ENCODE measurements at regions of chrX and their contacts with region 1.

Region 1: GRCh38 chrX:135050603-135051002 is 1.3 kb downstream of the RTL8A start:
- DNase-seq: no peak
- ATAC-seq: no peak
- H3K4me3 ChIP-seq: no peak overlapping the region
- H3K4me3 Mint-ChIP-seq: peak overlapping the region; percentile 87
- H3K27ac ChIP-seq: no peak overlapping the region
- H3K27ac Mint-ChIP-seq: peak overlapping the region; percentile 25 to 95
- H3K4me1 ChIP-seq: peaks cover 12% of the 10 kb centered on the region
- H3K4me1 Mint-ChIP-seq: peaks cover 17 to 21% of the 10 kb centered on the region in 2 donors
- H3K27me3 ChIP-seq: no peaks in the 10 kb centered on the region
- H3K27me3 Mint-ChIP-seq: peaks cover 0 to 8% of the 10 kb centered on the region in 2 donors
- CTCF ChIP-seq: no peak

Region 2: DNA sequence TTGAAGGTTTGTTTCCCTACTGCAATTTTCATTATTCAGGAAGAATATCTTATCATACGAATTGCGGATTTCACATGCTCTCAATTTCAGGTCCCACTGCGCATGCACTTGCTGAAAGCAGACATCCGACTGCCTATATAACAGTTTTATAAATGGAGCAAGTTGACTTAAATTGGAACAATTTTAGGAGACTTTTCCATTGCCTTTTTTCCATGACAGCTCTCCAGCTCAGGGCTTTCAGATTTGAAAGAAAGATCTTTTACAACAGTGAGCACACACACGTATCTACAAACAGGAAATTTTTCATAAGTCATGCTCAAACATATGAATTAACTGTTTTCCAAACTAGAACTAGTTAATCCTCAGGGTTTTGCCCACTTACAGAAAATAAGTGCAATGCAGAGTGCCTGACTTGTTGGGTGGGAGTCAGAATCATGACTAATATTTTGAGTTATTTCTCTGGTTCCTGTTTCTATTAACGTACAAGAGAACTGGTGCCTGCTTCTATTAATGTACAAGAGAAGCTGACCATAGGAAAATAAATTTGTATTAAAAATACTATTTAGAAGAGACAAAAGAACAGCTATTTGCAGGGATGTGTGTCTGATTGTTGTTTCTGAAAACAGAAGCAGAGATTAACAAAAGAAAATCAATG is 1203.1 kb before region 1 on chrX:
- intact Hi-C with region 1: no loop called
- DNase-seq: no peak
- ATAC-seq: no peak
- H3K4me3 ChIP-seq: no peak overlapping the region
- H3K4me3 Mint-ChIP-seq: no peak overlapping the region
- H3K27ac ChIP-seq: no peak overlapping the region
- H3K27ac Mint-ChIP-seq: no peak overlapping the region
- H3K4me1 ChIP-seq: no peaks in the 10 kb centered on the region
- H3K4me1 Mint-ChIP-seq: no peaks in the 10 kb centered on the region
- H3K27me3 ChIP-seq: no peaks in the 10 kb centered on the region
- H3K27me3 Mint-ChIP-seq: peaks cover 0 to 16% of the 10 kb centered on the region in 2 donors
- CTCF ChIP-seq: no peak

Region 3: GRCh38 chrX:135003876-135004623 is 46.6 kb before region 1 on chrX:
- intact Hi-C with region 1: loop called (anchors 1 kb)
- DNase-seq: peak; percentile 89 to 94
- ATAC-seq: peak; percentile 97 to 100 (median 98)
- H3K4me3 ChIP-seq: peak overlapping the region; percentile 32
- H3K4me3 Mint-ChIP-seq: peak overlapping the region; percentile 90
- H3K27ac ChIP-seq: no peak overlapping the region
- H3K27ac Mint-ChIP-seq: peak overlapping the region; percentile 65 to 92
- H3K4me1 ChIP-seq: peaks cover 5% of the 10 kb centered on the region
- H3K4me1 Mint-ChIP-seq: peaks cover 7 to 10% of the 10 kb centered on the region in 2 donors
- H3K27me3 ChIP-seq: no peaks in the 10 kb centered on the region
- H3K27me3 Mint-ChIP-seq: peaks cover 0 to 18% of the 10 kb centered on the region in 2 donors
- CTCF ChIP-seq: no peak

Region 4: GRCh38 chrX:135095715-135096114 is 45.1 kb after region 1 on chrX:
- intact Hi-C with region 1: loop called (anchors 5 kb)
- DNase-seq: no peak
- ATAC-seq: no peak
- H3K4me3 ChIP-seq: no peak overlapping the region
- H3K4me3 Mint-ChIP-seq: no peak overlapping the region
- H3K27ac ChIP-seq: no peak overlapping the region
- H3K27ac Mint-ChIP-seq: no peak overlapping the region
- H3K4me1 ChIP-seq: peaks cover 14% of the 10 kb centered on the region
- H3K4me1 Mint-ChIP-seq: peaks cover 7 to 14% of the 10 kb centered on the region in 2 donors
- H3K27me3 ChIP-seq: no peaks in the 10 kb centered on the region
- H3K27me3 Mint-ChIP-seq: peaks cover 11 to 32% of the 10 kb centered on the region in 2 donors
- CTCF ChIP-seq: no peak